ENCODE measurements at regions of chr10 and their contacts with region 1.

Region 1: DNA sequence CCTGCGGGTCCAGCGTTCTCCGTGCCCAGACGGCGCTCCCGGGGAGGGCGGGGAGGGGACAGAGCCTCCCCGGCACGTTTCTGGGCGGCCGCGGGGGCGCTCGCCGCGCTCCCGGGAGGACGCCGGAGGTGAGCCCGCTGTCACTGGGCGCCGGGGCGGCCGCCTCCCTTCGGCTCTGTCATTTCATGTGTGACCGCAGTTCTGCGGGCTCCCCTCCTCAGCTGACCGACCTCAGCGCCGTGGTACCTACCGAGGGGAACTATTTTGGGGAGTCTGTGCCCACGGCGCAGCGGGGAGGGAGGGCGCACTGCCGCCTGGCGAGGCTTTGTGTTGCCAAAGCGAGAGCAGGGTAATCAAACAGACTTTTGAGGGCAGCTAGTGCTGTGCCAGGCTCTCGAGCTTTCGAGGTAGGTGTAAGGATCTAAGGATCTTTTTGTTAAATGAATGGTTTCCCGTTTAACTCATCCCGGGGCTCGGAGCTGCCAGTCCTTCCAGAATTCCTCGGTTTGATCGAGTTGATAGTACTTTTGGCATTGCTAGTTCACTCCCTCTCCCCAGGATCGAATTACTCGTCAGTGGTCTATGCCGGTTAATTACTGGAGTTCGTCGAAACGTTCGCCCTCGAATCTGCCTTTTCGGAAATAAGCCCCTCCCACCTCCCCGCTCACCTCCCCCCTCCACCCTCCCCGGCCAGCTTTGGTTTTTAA is 1.9 kb downstream of the ARID5B start:
- DNase-seq: peak; percentile 68
- CTCF ChIP-seq: peak; percentile 27

Region 2: GRCh38 chr10:62016623-62017490 is 113.5 kb after region 1 on chr10:
- in situ Hi-C with region 1: loop called (anchors 10 kb)
- DNase-seq: no peak
- CTCF ChIP-seq: no peak

Region 3: GRCh38 chr10:62244780-62245467 is 341.6 kb after region 1 on chr10:
- in situ Hi-C with region 1: loop called (anchors 25 kb)
- DNase-seq: peak; percentile 30
- CTCF ChIP-seq: peak; percentile 84